Activated naive CD4-positive, alpha-beta T cell treated with anti-CD3 and anti-CD28 coated beads for 36 hours (primary cell): ENCODE measurements at regions of chr4 and their contacts with region 1.

Region 1: DNA sequence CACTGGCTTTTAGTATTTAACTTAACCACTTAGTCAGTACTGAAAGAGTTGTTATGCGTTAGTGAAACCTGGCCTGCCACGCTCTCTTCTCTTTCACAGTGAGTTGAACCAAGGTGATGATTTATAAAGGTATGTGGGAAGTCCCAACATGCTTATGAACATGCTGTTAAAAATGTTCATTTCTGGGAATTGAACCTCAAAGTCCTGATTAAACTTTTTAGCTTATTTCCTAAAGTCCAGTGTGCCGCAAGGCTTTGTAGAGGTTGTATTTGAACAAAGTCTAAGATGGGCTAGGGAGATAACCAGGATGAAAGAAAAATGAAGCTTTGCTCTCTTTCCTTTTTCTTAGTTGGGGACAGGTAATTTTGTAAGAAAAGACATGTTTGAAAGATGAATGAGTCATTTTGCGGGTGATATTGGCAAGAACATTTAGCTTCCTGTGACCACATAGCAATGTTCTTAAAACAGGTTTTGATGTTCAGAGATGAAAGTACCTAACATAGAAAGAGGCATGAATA is 270.3 kb downstream of the DTHD1 start:
- DNase-seq: peak; percentile 64
- H3K4me3 Mint-ChIP-seq: no peak overlapping the region
- H3K27ac Mint-ChIP-seq: peak overlapping the region; percentile 79
- H3K4me1 Mint-ChIP-seq: peaks cover 10% of the 10 kb centered on the region
- H3K27me3 Mint-ChIP-seq: peaks cover 2% of the 10 kb centered on the region

Region 2: DNA sequence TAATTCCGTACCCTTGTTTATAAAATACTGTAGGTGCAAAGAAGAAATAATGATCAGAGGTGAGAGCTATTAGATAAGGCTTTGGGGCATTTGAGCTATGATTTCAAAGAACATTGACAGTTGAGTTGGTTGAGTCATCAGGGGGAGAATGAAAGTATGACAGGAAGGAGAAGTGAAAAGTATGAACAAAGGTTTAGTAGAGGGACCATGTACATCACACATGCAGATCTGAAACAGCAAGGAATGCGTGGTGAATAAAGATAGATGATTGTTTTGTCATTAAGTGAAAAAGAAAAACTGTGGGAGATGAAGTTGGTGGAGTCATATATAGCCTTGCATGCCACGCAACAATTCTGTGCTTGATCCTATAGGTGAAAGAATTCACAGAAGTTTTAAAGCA is 470.6 kb before region 1 on chr4:
- CTCF ChIA-PET with region 1: no interaction called
- intact Hi-C with region 1: loop called (anchors 1 kb)
- DNase-seq: peak; percentile 48
- H3K4me3 Mint-ChIP-seq: no peak overlapping the region
- H3K27ac Mint-ChIP-seq: no peak overlapping the region
- H3K4me1 Mint-ChIP-seq: peaks cover 2% of the 10 kb centered on the region
- H3K27me3 Mint-ChIP-seq: no peaks in the 10 kb centered on the region

Region 3: GRCh38 chr4:36316607-36317006 is 235.1 kb before region 1 on chr4:
- CTCF ChIA-PET with region 1: no interaction called
- intact Hi-C with region 1: loop called (anchors 5 kb)
- DNase-seq: peak; percentile 22
- H3K4me3 Mint-ChIP-seq: no peak overlapping the region
- H3K27ac Mint-ChIP-seq: peak overlapping the region; percentile 80
- H3K4me1 Mint-ChIP-seq: peaks cover 48% of the 10 kb centered on the region
- H3K27me3 Mint-ChIP-seq: no peaks in the 10 kb centered on the region

Region 4: GRCh38 chr4:36502350-36502749 is 49.4 kb before region 1 on chr4:
- CTCF ChIA-PET with region 1: no interaction called
- intact Hi-C with region 1: loop called (anchors 1 kb)
- DNase-seq: no peak
- H3K4me3 Mint-ChIP-seq: no peak overlapping the region
- H3K27ac Mint-ChIP-seq: no peak overlapping the region
- H3K4me1 Mint-ChIP-seq: no peaks in the 10 kb centered on the region
- H3K27me3 Mint-ChIP-seq: peaks cover 13% of the 10 kb centered on the region

Region 5: DNA sequence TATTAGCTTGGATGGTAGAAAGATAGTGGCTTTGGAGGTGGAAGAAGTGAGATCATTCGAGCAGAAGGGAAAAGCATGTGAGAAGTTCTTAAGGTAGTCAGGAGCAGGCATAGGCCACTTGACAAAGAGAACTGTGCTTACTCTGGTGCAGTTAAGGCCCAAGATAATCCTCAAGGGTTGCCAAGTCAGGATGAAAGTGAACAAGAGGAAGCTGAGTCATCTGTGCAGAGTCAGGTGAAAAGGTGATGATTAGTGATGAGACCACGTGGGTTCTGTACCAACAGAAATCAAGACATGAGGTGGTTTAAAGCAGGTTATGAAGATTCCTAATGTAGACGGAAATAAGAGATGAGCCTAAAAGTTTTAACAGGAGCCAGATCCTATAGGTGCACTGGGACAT is 99.5 kb after region 1 on chr4:
- CTCF ChIA-PET with region 1: no interaction called
- intact Hi-C with region 1: loop called (anchors 2 kb)
- DNase-seq: peak; percentile 28
- H3K4me3 Mint-ChIP-seq: no peak overlapping the region
- H3K27ac Mint-ChIP-seq: no peak overlapping the region
- H3K4me1 Mint-ChIP-seq: peaks cover 3% of the 10 kb centered on the region
- H3K27me3 Mint-ChIP-seq: no peaks in the 10 kb centered on the region

Region 6: DNA sequence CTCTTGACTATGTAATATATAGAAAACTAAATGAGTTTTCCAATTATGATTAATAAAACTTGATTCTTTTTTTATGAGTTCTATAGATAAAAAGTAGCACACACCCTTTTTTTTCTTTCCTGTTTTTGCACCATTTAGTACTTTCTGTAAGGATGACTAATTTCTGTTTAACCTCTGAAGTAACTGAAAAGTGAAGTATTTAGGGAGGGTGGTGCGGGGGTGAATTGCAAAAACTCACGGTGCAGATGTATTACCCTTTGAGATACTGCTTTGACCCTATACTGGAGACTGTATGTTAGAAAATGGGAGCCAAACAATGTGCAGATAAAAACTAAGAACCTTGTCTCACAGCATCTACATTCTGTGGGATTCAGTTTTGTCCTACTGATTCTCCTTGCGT is 201.3 kb after region 1 on chr4:
- CTCF ChIA-PET with region 1: no interaction called
- intact Hi-C with region 1: loop called (anchors 2 kb)
- DNase-seq: peak; percentile 9
- H3K4me3 Mint-ChIP-seq: no peak overlapping the region
- H3K27ac Mint-ChIP-seq: no peak overlapping the region
- H3K4me1 Mint-ChIP-seq: no peaks in the 10 kb centered on the region
- H3K27me3 Mint-ChIP-seq: peaks cover 2% of the 10 kb centered on the region